ENCODE measurements at regions of chr6 and their contacts with region 1.

Region 1: GRCh38 chr6:36759148-36759759 is 61.6 kb downstream of the RAB44 start:
- DNase-seq: peak; percentile 86
- H3K4me3 Mint-ChIP-seq: no peak overlapping the region
- H3K27ac Mint-ChIP-seq: peak overlapping the region; percentile 55
- H3K4me1 Mint-ChIP-seq: peaks cover 47% of the 10 kb centered on the region
- H3K27me3 Mint-ChIP-seq: no peaks in the 10 kb centered on the region

Region 2: GRCh38 chr6:36623547-36624459 is 135.5 kb before region 1 on chr6:
- CTCF ChIA-PET with region 1: interaction called, 174 read pairs
- POLR2A ChIA-PET with region 1: interaction called, 4 read pairs
- DNase-seq: peak; percentile 82
- H3K4me3 Mint-ChIP-seq: no peak overlapping the region
- H3K27ac Mint-ChIP-seq: peak overlapping the region; percentile 0
- H3K4me1 Mint-ChIP-seq: peaks cover 33% of the 10 kb centered on the region
- H3K27me3 Mint-ChIP-seq: no peaks in the 10 kb centered on the region

Region 3: DNA sequence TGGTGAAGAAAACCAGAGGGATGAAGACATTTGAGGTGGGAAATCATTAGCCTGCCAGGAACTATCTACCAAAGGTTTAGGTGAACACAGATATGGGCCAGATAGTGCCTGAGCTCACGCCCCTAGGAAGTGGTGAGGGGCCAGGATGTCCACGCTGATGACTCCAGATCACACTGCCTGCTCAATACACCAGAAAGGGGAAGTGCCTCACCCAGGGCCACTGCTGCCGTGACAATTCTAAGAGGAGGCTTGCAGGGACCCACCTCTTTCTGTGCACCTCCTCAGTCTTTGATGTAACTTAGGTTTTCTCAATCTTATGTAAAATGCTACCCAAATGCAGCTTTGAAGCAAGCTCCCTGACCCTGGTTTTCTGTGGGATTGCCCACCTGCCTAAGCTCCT is 67.0 kb before region 1 on chr6:
- CTCF ChIA-PET with region 1: interaction called, 18 read pairs
- POLR2A ChIA-PET with region 1: interaction called, 9 read pairs
- DNase-seq: peak; percentile 82
- H3K4me3 Mint-ChIP-seq: peak overlapping the region; percentile 8
- H3K27ac Mint-ChIP-seq: peak overlapping the region; percentile 86
- H3K4me1 Mint-ChIP-seq: peaks cover 68% of the 10 kb centered on the region
- H3K27me3 Mint-ChIP-seq: no peaks in the 10 kb centered on the region

Region 4: GRCh38 chr6:36735110-36736071 is 23.9 kb before region 1 on chr6:
- CTCF ChIA-PET with region 1: interaction called, 10 read pairs
- POLR2A ChIA-PET with region 1: interaction called, 3 read pairs
- DNase-seq: peak; percentile 40
- H3K4me3 Mint-ChIP-seq: no peak overlapping the region
- H3K27ac Mint-ChIP-seq: peak overlapping the region; percentile 70
- H3K4me1 Mint-ChIP-seq: peaks cover 11% of the 10 kb centered on the region
- H3K27me3 Mint-ChIP-seq: peaks cover 3% of the 10 kb centered on the region

Region 5: DNA sequence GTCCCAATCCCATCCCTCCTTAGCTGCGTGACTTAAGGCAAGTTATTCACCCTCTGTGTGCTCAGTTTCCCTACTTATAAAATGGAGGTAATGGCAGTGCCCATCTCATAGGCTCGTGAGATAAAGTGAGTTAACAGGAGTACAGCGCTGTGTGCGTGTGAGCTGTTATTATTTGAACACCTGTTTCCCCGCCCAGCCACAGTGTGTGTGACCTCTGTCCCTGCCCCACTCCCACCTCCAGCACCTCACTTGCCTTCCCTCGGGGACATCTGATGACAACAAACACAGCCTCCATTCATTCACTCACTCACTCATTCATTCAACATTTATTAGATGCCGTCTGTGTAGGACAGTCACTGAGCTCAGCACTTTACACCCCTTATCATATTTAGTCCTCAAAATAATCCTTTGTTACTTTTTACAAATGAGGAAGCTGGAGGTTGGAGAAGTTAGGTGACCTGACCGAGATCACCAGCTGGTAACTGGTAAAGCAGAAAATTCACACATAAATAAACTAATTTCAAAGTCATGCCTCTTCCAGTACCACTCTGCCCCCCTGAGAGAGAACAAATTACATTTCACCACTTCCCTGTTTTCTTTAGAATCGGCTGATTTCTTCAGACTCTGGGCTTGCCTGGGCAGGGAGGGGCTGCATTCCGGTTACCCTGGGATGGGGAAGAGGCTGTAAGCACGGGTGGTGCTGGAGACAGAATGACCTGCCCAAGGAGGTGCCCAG is 21.4 kb after region 1 on chr6:
- CTCF ChIA-PET with region 1: interaction called, 327 read pairs
- POLR2A ChIA-PET with region 1: interaction called, 83 read pairs
- DNase-seq: no peak
- H3K4me3 Mint-ChIP-seq: no peak overlapping the region
- H3K27ac Mint-ChIP-seq: no peak overlapping the region
- H3K4me1 Mint-ChIP-seq: peaks cover 10% of the 10 kb centered on the region
- H3K27me3 Mint-ChIP-seq: peaks cover 20% of the 10 kb centered on the region

Measured in activated CD4-positive, alpha-beta memory T cell treated with anti-CD3 and anti-CD28 coated beads, Interleukin-2, amount 10 ng/mL, durations not matched to agents 7 days and 5 days (primary cell).